ENCODE measurements at regions of chr7 and their contacts with region 1.

Region 1: DNA sequence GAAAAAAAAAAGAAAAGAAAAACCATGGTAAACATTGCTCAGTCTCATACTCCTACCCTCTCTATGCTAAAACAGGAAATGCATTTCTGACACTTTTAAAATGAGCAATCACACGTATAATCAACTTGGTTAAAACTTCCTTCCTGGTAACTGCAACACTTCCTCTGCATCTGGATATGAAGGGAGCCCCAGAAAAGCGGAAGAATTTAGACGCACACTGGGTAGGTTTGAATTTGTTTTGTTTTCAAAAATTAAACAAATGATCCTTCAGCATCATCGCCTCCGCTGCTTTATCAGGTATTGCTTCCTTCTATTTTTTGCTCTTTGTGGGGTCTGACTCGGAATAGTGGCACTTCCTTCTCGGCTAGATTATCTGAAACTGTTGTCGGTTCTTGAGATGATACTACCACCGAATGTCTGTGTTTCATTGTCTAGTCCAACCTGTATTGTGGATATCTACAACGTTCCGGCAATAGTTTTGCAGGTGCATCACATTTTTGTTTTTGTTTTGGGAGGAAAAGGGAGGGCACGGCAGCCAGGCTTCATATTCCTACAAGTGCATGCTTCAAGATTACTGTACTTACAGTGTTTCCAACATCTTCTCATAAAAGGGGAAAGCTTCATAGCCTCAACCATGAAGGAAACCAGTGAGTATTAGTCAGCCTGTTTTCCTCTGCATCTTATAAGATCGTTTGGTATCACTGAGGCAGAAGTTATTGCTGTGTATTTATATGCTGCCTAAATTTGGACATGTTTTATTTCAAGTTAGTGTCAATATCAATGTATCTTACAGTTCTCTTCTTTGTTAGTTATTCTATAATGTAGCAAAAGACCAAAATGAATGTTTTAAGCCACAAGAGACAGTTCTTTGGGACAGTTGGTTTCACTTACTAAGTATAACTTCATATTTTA is at the start of gene PIK3CG:
- DNase-seq: peak; percentile 58 to 77 (median 66)
- H3K4me3 ChIP-seq: peak within 1 kb of the TSS; percentile 68 to 83
- H3K4me3 Mint-ChIP-seq: peak within 1 kb of the TSS; percentile 90 to 97 (median 93)
- H3K27ac ChIP-seq: peak within 1 kb of the TSS; percentile 66
- H3K27ac Mint-ChIP-seq: peak within 1 kb of the TSS; percentile 88 to 95 (median 92)
- H3K4me1 ChIP-seq: peaks cover 67% of the 10 kb centered on the region
- H3K4me1 Mint-ChIP-seq: peaks cover 57 to 87% (median 69%) of the 10 kb centered on the region in 4 donors
- H3K27me3 ChIP-seq: no peaks in the 10 kb centered on the region
- H3K27me3 Mint-ChIP-seq: no peaks in the 10 kb centered on the region
- total RNA-seq, gene PIK3CG: 32.3 to 32.6 TPM

Region 2: GRCh38 chr7:106793015-106793975 is 72.1 kb before region 1 on chr7:
- CTCF ChIA-PET with region 1: interaction called, 9 read pairs
- POLR2A ChIA-PET with region 1: no interaction called
- intact Hi-C with region 1: loop called (anchors 2 kb)
- DNase-seq: peak in 4 of 5 donors; percentile 47 to 52 (median 48)
- H3K4me3 ChIP-seq: no peak overlapping the region
- H3K4me3 Mint-ChIP-seq: no peak overlapping the region
- H3K27ac ChIP-seq: no peak overlapping the region
- H3K27ac Mint-ChIP-seq: no peak overlapping the region
- H3K4me1 ChIP-seq: no peaks in the 10 kb centered on the region
- H3K4me1 Mint-ChIP-seq: peaks cover 0 to 3% (median 0%) of the 10 kb centered on the region in 4 donors
- H3K27me3 ChIP-seq: no peaks in the 10 kb centered on the region
- H3K27me3 Mint-ChIP-seq: peaks cover 2 to 3% of the 10 kb centered on the region in 2 donors

Region 3: DNA sequence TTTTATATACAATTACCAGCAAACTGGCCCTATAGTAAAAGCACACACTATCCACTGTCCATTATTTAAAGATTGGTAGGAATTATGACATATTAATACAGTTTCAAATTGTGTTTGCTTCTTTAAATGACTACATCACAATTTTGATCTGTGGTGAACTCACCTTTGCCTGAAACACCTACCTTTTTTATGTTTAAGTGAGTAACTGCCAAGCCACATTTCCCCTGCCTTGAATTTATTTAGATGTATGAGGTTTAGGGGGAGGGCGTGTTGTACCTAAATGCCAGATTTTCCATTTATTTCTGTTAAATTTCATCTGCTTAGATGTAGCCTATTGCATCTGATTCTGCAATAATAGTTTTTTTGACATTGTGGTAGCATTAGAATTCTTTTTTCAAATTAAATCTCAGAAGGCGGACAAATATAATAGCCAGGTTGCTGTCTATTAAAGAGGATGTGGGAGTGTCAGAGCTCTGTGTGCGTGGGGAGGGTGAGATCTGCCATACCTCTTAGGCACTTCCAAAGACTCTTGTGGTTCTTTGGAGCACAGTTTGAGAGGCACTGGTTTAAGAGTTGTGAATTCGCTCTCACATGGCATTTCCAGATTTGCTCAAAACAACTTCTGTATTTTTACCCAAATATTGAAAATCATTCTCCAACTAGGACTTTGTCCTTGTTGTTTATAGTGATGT is 13.5 kb after region 1 on chr7:
- CTCF ChIA-PET with region 1: no interaction called
- POLR2A ChIA-PET with region 1: no interaction called
- intact Hi-C with region 1: loop called (anchors 2 kb)
- DNase-seq: no peak
- H3K4me3 ChIP-seq: no peak overlapping the region
- H3K4me3 Mint-ChIP-seq: no peak overlapping the region
- H3K27ac ChIP-seq: no peak overlapping the region
- H3K27ac Mint-ChIP-seq: peak overlapping the region in 1 of 7 donors; percentile 1
- H3K4me1 ChIP-seq: no peaks in the 10 kb centered on the region
- H3K4me1 Mint-ChIP-seq: peaks cover 14 to 36% (median 18%) of the 10 kb centered on the region in 4 donors
- H3K27me3 ChIP-seq: no peaks in the 10 kb centered on the region
- H3K27me3 Mint-ChIP-seq: no peaks in the 10 kb centered on the region

Region 4: GRCh38 chr7:107044347-107045194 is 179.2 kb after region 1 on chr7 and contains the start of gene PRKAR2B:
- CTCF ChIA-PET with region 1: no interaction called
- POLR2A ChIA-PET with region 1: no interaction called
- intact Hi-C with region 1: loop called (anchors 1 kb)
- DNase-seq: peak; percentile 73 to 85 (median 80)
- H3K4me3 ChIP-seq: peak within 1 kb of the TSS; percentile 42 to 61
- H3K4me3 Mint-ChIP-seq: peak within 1 kb of the TSS; percentile 85 to 95 (median 89)
- H3K27ac ChIP-seq: no peak within 1 kb of the TSS
- H3K27ac Mint-ChIP-seq: peak within 1 kb of the TSS; percentile 21 to 92 (median 62)
- H3K4me1 ChIP-seq: peaks cover 15% of the 10 kb centered on the region
- H3K4me1 Mint-ChIP-seq: peaks cover 7 to 21% (median 10%) of the 10 kb centered on the region in 4 donors
- H3K27me3 ChIP-seq: peaks cover 30% of the 10 kb centered on the region
- H3K27me3 Mint-ChIP-seq: peaks cover 20 to 26% of the 10 kb centered on the region in 2 donors
- total RNA-seq, gene PRKAR2B: 0.29 to 0.47 TPM

Region 5: GRCh38 chr7:107078517-107078966 is 213.2 kb after region 1 on chr7:
- CTCF ChIA-PET with region 1: no interaction called
- POLR2A ChIA-PET with region 1: no interaction called
- intact Hi-C with region 1: no loop called
- DNase-seq: no peak
- H3K4me3 ChIP-seq: no peak overlapping the region
- H3K4me3 Mint-ChIP-seq: no peak overlapping the region
- H3K27ac ChIP-seq: no peak overlapping the region
- H3K27ac Mint-ChIP-seq: no peak overlapping the region
- H3K4me1 ChIP-seq: no peaks in the 10 kb centered on the region
- H3K4me1 Mint-ChIP-seq: no peaks in the 10 kb centered on the region
- H3K27me3 ChIP-seq: no peaks in the 10 kb centered on the region
- H3K27me3 Mint-ChIP-seq: no peaks in the 10 kb centered on the region

Region 6: GRCh38 chr7:107563775-107564552 is 698.6 kb after region 1 on chr7 and contains the starts of genes COG5 and DUS4L:
- CTCF ChIA-PET with region 1: no interaction called
- POLR2A ChIA-PET with region 1: no interaction called
- intact Hi-C with region 1: loop called (anchors 10 kb)
- DNase-seq: peak; percentile 83 to 86 (median 85)
- H3K4me3 ChIP-seq: peak within 1 kb of the TSS; percentile 76 to 85
- H3K4me3 Mint-ChIP-seq: peak within 1 kb of the TSS; percentile 85 to 95 (median 90)
- H3K27ac ChIP-seq: peak within 1 kb of the TSS; percentile 97
- H3K27ac Mint-ChIP-seq: peak within 1 kb of the TSS; percentile 92 to 99 (median 97)
- H3K4me1 ChIP-seq: peaks cover 56% of the 10 kb centered on the region
- H3K4me1 Mint-ChIP-seq: peaks cover 50 to 66% (median 58%) of the 10 kb centered on the region in 4 donors
- H3K27me3 ChIP-seq: no peaks in the 10 kb centered on the region
- H3K27me3 Mint-ChIP-seq: no peaks in the 10 kb centered on the region
- total RNA-seq, gene COG5: 85.0 to 87.8 TPM
- total RNA-seq, gene DUS4L: 10.9 to 11.3 TPM

Region 7: DNA sequence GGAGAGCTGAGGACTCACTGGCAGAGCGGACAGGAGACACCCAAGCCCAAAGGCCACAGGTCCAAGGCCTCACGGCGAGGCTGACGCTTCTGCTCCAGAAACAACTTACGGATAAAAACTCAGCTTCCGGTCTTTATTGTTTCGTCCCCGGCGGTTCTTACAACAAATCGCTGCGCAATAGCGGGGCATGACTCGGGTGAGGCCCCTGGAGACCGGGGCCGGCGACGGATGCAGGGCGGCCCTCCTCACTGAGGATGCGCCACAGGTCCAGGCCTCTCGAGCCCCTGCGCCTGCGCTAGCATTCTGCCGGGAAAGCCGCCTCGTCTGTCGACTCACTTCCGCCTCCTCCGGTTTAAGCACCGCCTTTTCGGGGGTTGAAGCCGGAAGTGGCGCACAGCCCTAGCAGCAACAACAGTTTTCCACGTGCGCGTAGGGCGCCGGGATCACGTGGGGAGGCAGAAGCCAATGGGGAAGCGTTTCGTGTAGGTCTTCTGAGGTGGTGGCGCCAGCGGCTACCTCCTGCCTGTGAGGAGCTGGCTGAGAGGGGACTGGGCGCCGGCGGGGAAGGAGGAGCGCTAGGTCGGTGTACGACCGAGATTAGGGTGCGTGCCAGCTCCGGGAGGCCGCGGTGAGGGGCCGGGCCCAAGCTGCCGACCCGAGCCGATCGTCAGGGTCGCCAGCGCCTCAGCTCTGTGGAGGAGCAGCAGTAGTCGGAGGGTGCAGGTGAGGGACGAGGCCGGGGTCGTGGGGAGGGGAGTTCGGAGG is 1704.2 kb after region 1 on chr7 and contains the starts of genes DNAJB9 and THAP5:
- CTCF ChIA-PET with region 1: no interaction called
- POLR2A ChIA-PET with region 1: no interaction called
- intact Hi-C with region 1: loop called (anchors 1 kb)
- DNase-seq: peak; percentile 99 to 100 (median 100)
- H3K4me3 ChIP-seq: peak within 1 kb of the TSS; percentile 77 to 97
- H3K4me3 Mint-ChIP-seq: peak within 1 kb of the TSS; percentile 91 to 99 (median 96)
- H3K27ac ChIP-seq: peak within 1 kb of the TSS; percentile 100
- H3K27ac Mint-ChIP-seq: peak within 1 kb of the TSS; percentile 96 to 100 (median 99)
- H3K4me1 ChIP-seq: peaks cover 59% of the 10 kb centered on the region
- H3K4me1 Mint-ChIP-seq: peaks cover 31 to 82% (median 51%) of the 10 kb centered on the region in 4 donors
- H3K27me3 ChIP-seq: no peaks in the 10 kb centered on the region
- H3K27me3 Mint-ChIP-seq: no peaks in the 10 kb centered on the region
- total RNA-seq, gene DNAJB9: 43.6 to 49.3 TPM
- total RNA-seq, gene THAP5: 45.9 to 52.8 TPM